ENCODE measurements at regions of chr10 and their contacts with region 1.

Region 1: DNA sequence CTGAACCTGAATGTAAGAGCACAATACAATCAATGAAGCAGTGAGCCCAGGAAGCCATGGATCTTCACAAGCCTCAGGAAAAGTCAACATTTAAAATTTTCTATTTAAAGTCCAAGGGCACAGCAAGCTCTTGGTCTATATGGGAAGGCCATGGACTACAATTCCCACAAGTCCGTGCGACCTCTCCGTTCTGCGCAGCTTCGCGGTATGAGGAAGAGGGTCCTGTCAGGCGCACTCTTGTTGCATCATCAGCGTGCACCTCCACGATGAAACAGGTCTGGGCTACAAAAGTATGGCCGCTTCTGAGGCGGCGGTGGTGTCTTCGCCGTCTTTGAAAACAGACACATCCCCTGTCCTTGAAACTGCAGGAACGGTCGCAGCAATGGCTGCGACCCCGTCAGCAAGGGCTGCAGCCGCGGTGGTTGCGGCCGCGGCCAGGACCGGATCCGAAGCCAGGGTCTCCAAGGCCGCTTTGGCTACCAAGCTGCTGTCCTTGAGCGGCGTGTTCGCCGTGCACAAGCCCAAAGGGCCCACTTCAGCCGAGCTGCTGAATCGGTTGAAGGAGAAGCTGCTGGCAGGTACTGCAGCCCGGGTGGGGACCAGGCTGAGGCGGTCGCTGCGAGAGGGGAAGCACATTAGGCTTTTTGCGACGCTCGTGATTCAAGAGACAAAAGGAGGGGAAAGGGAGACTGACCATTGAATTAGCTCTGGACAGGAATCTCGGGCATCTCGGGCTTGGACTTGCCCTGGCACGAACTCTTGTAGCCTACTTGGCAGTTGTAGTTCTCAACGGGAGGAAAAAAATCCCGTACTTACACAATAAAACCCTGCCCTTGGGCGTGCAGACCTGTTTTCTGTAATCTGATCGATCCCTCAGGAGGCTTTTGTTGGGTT is at the start of gene TRUB1:
- DNase-seq: peak; percentile 72
- ATAC-seq: peak; percentile 100
- H3K4me3 Mint-ChIP-seq: peak within 1 kb of the TSS; percentile 97
- H3K27ac Mint-ChIP-seq: peak within 1 kb of the TSS; percentile 95
- H3K4me1 Mint-ChIP-seq: peaks cover 24% of the 10 kb centered on the region
- H3K27me3 Mint-ChIP-seq: peaks cover 2% of the 10 kb centered on the region
- CTCF ChIP-seq: no peak
- total RNA-seq, gene TRUB1: 13.0 and 13.9 TPM in 2 replicates

Region 2: GRCh38 chr10:114499630-114500190 is 438.5 kb before region 1 on chr10:
- CTCF ChIA-PET with region 1: no interaction called
- POLR2A ChIA-PET with region 1: no interaction called
- intact Hi-C with region 1: loop called (anchors 10 kb)
- DNase-seq: peak; percentile 37
- ATAC-seq: peak; percentile 49
- H3K4me3 Mint-ChIP-seq: peak overlapping the region; percentile 67
- H3K27ac Mint-ChIP-seq: peak overlapping the region; percentile 96
- H3K4me1 Mint-ChIP-seq: peaks cover 83% of the 10 kb centered on the region
- H3K27me3 Mint-ChIP-seq: no peaks in the 10 kb centered on the region
- CTCF ChIP-seq: no peak

Region 3: GRCh38 chr10:114821293-114821914 is 116.8 kb before region 1 on chr10 and contains the start of gene FHIP2A:
- CTCF ChIA-PET with region 1: interaction called, 7 read pairs
- POLR2A ChIA-PET with region 1: interaction called, 9 read pairs
- intact Hi-C with region 1: loop called (anchors 1 kb)
- DNase-seq: peak; percentile 95
- ATAC-seq: peak; percentile 93
- H3K4me3 Mint-ChIP-seq: peak within 1 kb of the TSS; percentile 91
- H3K27ac Mint-ChIP-seq: peak within 1 kb of the TSS; percentile 90
- H3K4me1 Mint-ChIP-seq: peaks cover 27% of the 10 kb centered on the region
- H3K27me3 Mint-ChIP-seq: no peaks in the 10 kb centered on the region
- CTCF ChIP-seq: no peak
- total RNA-seq, gene FHIP2A: 16.5 and 20.2 TPM in 2 replicates

Region 4: DNA sequence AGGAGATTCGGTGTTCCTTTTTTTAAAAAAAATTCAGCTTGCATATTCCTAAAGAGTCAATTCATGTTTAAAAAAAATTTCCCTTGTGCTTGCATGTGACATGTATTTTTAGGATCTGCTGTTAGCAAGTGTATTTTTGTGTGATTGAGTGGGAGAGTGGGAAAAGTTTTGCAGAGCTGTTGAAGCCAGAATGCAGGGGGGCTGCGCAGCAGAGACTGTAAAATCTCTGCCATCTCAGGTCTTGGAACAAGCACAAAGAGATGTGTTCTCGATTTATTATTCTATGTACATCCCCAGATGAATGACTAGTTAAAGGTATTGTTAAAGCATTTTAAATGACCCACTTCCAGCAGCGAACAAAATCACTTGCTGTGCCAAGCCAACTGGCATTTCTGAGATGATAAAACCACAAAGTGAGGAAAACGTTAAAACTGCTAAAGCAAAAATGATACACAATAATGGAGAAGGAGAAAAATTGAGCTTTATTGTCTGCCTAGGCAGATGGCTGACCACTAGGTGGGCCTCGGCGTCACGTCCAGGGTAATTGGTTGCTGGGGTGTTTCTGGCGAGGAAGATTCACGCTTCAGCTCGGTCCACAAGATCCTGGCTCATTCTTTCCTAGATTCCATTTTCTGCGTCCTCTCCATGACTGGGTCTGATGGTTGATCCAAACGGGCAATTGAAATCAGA is 88.0 kb after region 1 on chr10:
- CTCF ChIA-PET with region 1: no interaction called
- POLR2A ChIA-PET with region 1: no interaction called
- intact Hi-C with region 1: no loop called
- DNase-seq: no peak
- ATAC-seq: no peak
- H3K4me3 Mint-ChIP-seq: no peak overlapping the region
- H3K27ac Mint-ChIP-seq: no peak overlapping the region
- H3K4me1 Mint-ChIP-seq: peaks cover 6% of the 10 kb centered on the region
- H3K27me3 Mint-ChIP-seq: no peaks in the 10 kb centered on the region
- CTCF ChIP-seq: no peak

Region 5: GRCh38 chr10:115092555-115093285 is 154.5 kb after region 1 on chr10:
- CTCF ChIA-PET with region 1: no interaction called
- POLR2A ChIA-PET with region 1: no interaction called
- intact Hi-C with region 1: loop called (anchors 1 kb)
- DNase-seq: peak; percentile 60
- ATAC-seq: peak; percentile 84
- H3K4me3 Mint-ChIP-seq: peak overlapping the region; percentile 85
- H3K27ac Mint-ChIP-seq: no peak overlapping the region
- H3K4me1 Mint-ChIP-seq: peaks cover 13% of the 10 kb centered on the region
- H3K27me3 Mint-ChIP-seq: peaks cover 35% of the 10 kb centered on the region
- CTCF ChIP-seq: no peak

Measured in activated B cell treated with CpG ODN at 0.5 μM for 24 hours (primary cell).